GM12878 (cell line): ENCODE measurements at regions of chr13 and their contacts with region 1.

Region 1: GRCh38 chr13:91375116-91375729 is 23.2 kb upstream of the GPC5 start:
- DNase-seq: no peak
- ATAC-seq: peak; percentile 99
- H3K4me3 ChIP-seq: no peak overlapping the region
- H3K27ac ChIP-seq: no peak overlapping the region
- H3K4me1 ChIP-seq: no peaks in the 10 kb centered on the region
- H3K27me3 ChIP-seq: no peaks in the 10 kb centered on the region
- CTCF ChIP-seq: peak; percentile 61 to 70 (median 68); a peak in 5 of 6 replicates
- EP300 ChIP-seq: no peak
- POLR2A ChIP-seq: no peak
- RAD21 ChIP-seq: peak; percentile 70

Region 2: DNA sequence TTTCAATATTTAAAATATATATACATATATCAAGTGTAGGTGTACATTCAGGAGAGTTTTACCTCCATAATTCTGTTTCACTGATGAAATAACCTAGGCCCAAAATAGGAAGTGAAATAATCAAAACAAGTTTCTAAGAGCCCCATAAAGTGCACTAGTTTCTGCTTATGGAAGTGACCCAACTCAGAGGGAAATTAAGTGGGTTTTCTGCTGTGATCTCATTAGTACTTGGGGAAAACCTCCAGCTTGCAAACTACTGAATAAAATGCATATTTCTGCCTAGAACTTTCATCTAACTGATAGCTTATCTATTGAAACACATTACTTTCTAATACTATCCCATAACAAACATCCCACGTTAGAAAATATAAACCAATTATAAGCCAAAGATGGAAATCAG is 73.1 kb before region 1 on chr13:
- CTCF ChIA-PET with region 1: interaction called, 10 read pairs
- POLR2A ChIA-PET with region 1: no interaction called
- RAD21 ChIA-PET with region 1: no interaction called
- SMC1A ChIA-PET with region 1: interaction called, 9 read pairs
- in situ Hi-C with region 1: no loop called
- intact Hi-C with region 1: no loop called
- DNase-seq: no peak
- ATAC-seq: peak; percentile 89
- H3K4me3 ChIP-seq: no peak overlapping the region
- H3K27ac ChIP-seq: no peak overlapping the region
- H3K4me1 ChIP-seq: no peaks in the 10 kb centered on the region
- H3K27me3 ChIP-seq: no peaks in the 10 kb centered on the region
- CTCF ChIP-seq: no peak
- EP300 ChIP-seq: no peak
- POLR2A ChIP-seq: no peak
- RAD21 ChIP-seq: no peak

Region 3: GRCh38 chr13:91358387-91358782 is 16.8 kb before region 1 on chr13:
- CTCF ChIA-PET with region 1: interaction called, 14 read pairs
- POLR2A ChIA-PET with region 1: interaction called, 3 read pairs
- RAD21 ChIA-PET with region 1: interaction called, 3 read pairs
- SMC1A ChIA-PET with region 1: interaction called, 18 read pairs
- in situ Hi-C with region 1: no loop called
- intact Hi-C with region 1: no loop called
- DNase-seq: no peak
- ATAC-seq: peak; percentile 25
- H3K4me3 ChIP-seq: no peak overlapping the region
- H3K27ac ChIP-seq: no peak overlapping the region
- H3K4me1 ChIP-seq: no peaks in the 10 kb centered on the region
- H3K27me3 ChIP-seq: no peaks in the 10 kb centered on the region
- CTCF ChIP-seq: no peak
- EP300 ChIP-seq: no peak
- POLR2A ChIP-seq: peak; percentile 65; the same call in 1 of the 2 replicates
- RAD21 ChIP-seq: no peak

Region 4: GRCh38 chr13:91406619-91407018 is 31.4 kb after region 1 on chr13:
- CTCF ChIA-PET with region 1: interaction called, 69 read pairs
- POLR2A ChIA-PET with region 1: no interaction called
- RAD21 ChIA-PET with region 1: interaction called, 28 read pairs
- SMC1A ChIA-PET with region 1: interaction called, 38 read pairs
- in situ Hi-C with region 1: no loop called
- intact Hi-C with region 1: loop called (anchors 5 kb)
- DNase-seq: no peak
- ATAC-seq: peak; percentile 92
- H3K4me3 ChIP-seq: no peak overlapping the region
- H3K27ac ChIP-seq: no peak overlapping the region
- H3K4me1 ChIP-seq: peaks cover 3% of the 10 kb centered on the region; the same call in 1 of the 2 replicates
- H3K27me3 ChIP-seq: no peaks in the 10 kb centered on the region
- CTCF ChIP-seq: peak; percentile 60 to 68 (median 67); a peak in 5 of 6 replicates
- EP300 ChIP-seq: no peak
- POLR2A ChIP-seq: no peak
- RAD21 ChIP-seq: peak; percentile 77

Region 5: GRCh38 chr13:91647361-91647990 is 272.3 kb after region 1 on chr13:
- CTCF ChIA-PET with region 1: interaction called, 5 read pairs
- POLR2A ChIA-PET with region 1: no interaction called
- RAD21 ChIA-PET with region 1: no interaction called
- SMC1A ChIA-PET with region 1: interaction called, 4 read pairs
- in situ Hi-C with region 1: no loop called
- intact Hi-C with region 1: loop called (anchors 10 kb)
- DNase-seq: no peak
- ATAC-seq: peak; percentile 79
- H3K4me3 ChIP-seq: no peak overlapping the region
- H3K27ac ChIP-seq: no peak overlapping the region
- H3K4me1 ChIP-seq: no peaks in the 10 kb centered on the region
- H3K27me3 ChIP-seq: no peaks in the 10 kb centered on the region
- CTCF ChIP-seq: peak; percentile 45 to 72 (median 59)
- EP300 ChIP-seq: no peak
- POLR2A ChIP-seq: no peak
- RAD21 ChIP-seq: peak; percentile 36; the same call in 1 of the 2 replicates

Region 6: GRCh38 chr13:91722267-91722884 is 347.2 kb after region 1 on chr13:
- CTCF ChIA-PET with region 1: interaction called, 11 read pairs
- POLR2A ChIA-PET with region 1: no interaction called
- RAD21 ChIA-PET with region 1: no interaction called
- SMC1A ChIA-PET with region 1: interaction called, 6 read pairs
- in situ Hi-C with region 1: loop called (anchors 5 kb)
- intact Hi-C with region 1: loop called (anchors 2 kb)
- DNase-seq: no peak
- ATAC-seq: no peak
- H3K4me3 ChIP-seq: no peak overlapping the region
- H3K27ac ChIP-seq: no peak overlapping the region
- H3K4me1 ChIP-seq: no peaks in the 10 kb centered on the region
- H3K27me3 ChIP-seq: peaks cover 0 to 3% of the 10 kb centered on the region in 2 experiments; a peak in 1 of 4 replicates
- CTCF ChIP-seq: peak; percentile 33 to 50 (median 42); a peak in 4 of 6 replicates
- EP300 ChIP-seq: no peak
- POLR2A ChIP-seq: no peak
- RAD21 ChIP-seq: peak; percentile 45